ENCODE measurements at regions of chr3 and their contacts with region 1.

Region 1: DNA sequence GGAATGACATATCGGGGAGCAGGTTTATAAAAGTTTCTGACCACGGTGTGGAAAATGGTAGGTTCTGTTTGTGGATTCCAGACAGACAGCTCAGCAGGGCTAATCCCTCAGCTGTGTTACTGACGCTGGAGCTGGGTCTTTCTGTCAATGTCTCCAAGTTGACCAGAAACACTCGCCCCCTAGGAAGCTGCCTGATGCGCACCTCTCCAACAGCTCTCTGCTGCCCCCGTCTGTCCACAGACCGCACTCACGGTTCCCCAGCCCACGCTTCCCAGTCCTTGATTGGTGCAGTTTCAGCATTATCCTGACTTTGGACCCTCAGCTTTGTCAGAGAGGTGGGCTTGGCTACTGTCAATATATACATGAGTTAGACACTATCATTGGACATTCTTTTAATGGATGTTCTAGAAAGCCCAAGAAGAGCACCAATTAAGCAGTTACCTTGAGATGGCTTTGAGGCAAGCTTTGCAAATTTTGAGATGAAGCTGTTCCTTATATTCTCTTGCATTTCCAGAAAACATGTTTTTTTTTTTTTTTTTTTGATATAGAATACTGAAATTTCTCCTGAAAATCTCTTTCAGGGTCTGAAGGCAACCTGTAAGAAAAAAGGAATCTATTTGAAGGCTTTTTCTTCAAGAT is 98.9 kb upstream of the TBC1D5 start:
- DNase-seq: peak; percentile 46
- ATAC-seq: peak; percentile 99
- H3K4me3 ChIP-seq: no peak overlapping the region
- H3K27ac ChIP-seq: no peak overlapping the region
- H3K4me1 ChIP-seq: no peaks in the 10 kb centered on the region
- H3K27me3 ChIP-seq: peaks cover 2% of the 10 kb centered on the region
- CTCF ChIP-seq: peak; percentile 97
- POLR2A ChIP-seq: 0 out of 2 replicates have a peak, but pooled peaks have one; percentile 42
- RAD21 ChIP-seq: peak; percentile 96

Region 2: DNA sequence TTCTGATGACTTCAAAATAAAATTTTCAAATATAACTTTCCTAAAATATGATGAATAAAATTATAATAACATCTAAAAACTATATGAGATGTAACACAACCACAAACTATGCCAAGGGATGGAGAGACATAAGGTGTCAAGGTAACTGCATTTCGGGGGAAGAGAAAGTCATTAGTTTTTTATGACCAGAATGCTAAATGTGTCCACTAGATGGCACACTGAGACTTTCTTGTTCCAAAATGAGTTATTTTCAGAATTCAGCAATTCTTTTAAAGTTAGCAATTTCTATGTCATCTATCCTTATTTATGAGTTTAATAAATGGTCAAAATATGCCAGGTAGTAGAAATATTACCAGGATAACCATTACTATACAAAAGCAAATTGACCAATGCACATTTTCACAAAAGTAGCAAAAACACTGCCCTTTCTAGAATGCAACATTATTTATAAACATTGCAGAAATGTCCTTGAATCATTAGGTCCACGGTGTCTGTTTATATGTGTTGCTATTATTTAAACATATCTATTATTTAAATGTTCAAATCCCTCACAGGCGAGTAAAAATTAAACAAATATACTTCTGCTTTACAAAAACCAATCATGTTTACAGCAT is 582.4 kb before region 1 on chr3:
- CTCF ChIA-PET with region 1: no interaction called
- POLR2A ChIA-PET with region 1: no interaction called
- dilution Hi-C with region 1: no loop called
- in situ Hi-C with region 1: loop called (anchors 10 kb)
- intact Hi-C with region 1: loop called (anchors 1 kb)
- DNase-seq: peak; percentile 39
- ATAC-seq: 0 out of 2 replicates have a peak, but pooled peaks have one; percentile 27
- H3K4me3 ChIP-seq: no peak overlapping the region
- H3K27ac ChIP-seq: no peak overlapping the region
- H3K4me1 ChIP-seq: no peaks in the 10 kb centered on the region
- H3K27me3 ChIP-seq: no peaks in the 10 kb centered on the region
- CTCF ChIP-seq: peak; percentile 70
- POLR2A ChIP-seq: no peak
- RAD21 ChIP-seq: peak; percentile 69

Region 3: GRCh38 chr3:17423786-17424536 is 417.3 kb before region 1 on chr3:
- CTCF ChIA-PET with region 1: interaction called, 43 read pairs
- POLR2A ChIA-PET with region 1: no interaction called
- dilution Hi-C with region 1: no loop called
- in situ Hi-C with region 1: no loop called
- intact Hi-C with region 1: no loop called
- DNase-seq: peak; percentile 6
- ATAC-seq: peak; percentile 40; the same call in 1 of the 2 replicates
- H3K4me3 ChIP-seq: no peak overlapping the region
- H3K27ac ChIP-seq: no peak overlapping the region
- H3K4me1 ChIP-seq: no peaks in the 10 kb centered on the region
- H3K27me3 ChIP-seq: no peaks in the 10 kb centered on the region
- CTCF ChIP-seq: no peak
- POLR2A ChIP-seq: no peak
- RAD21 ChIP-seq: no peak

Region 4: DNA sequence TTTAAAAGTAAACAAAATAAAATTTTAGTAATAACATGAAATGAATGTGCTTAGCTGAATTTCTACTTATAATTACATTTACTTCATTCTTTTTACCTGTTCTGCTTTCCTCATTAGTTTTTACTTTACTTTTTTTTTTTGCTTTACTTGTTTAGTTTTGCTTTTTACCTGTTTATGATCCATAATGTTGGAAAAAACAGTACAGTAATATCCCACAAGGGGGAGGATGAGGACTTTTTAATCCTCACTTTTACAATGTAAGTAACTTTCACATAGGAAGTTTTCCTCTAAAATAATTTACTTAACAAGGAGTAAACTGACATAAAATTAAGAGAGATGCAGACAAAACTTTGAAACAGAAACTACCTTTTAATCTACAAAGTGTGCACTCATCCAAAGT is 367.5 kb before region 1 on chr3:
- CTCF ChIA-PET with region 1: interaction called, 5 read pairs
- POLR2A ChIA-PET with region 1: no interaction called
- dilution Hi-C with region 1: no loop called
- in situ Hi-C with region 1: no loop called
- intact Hi-C with region 1: loop called (anchors 1 kb)
- DNase-seq: peak; percentile 23
- ATAC-seq: no peak
- H3K4me3 ChIP-seq: no peak overlapping the region
- H3K27ac ChIP-seq: no peak overlapping the region
- H3K4me1 ChIP-seq: no peaks in the 10 kb centered on the region; the same call in 1 of the 2 replicates
- H3K27me3 ChIP-seq: no peaks in the 10 kb centered on the region
- CTCF ChIP-seq: peak; percentile 41
- POLR2A ChIP-seq: no peak
- RAD21 ChIP-seq: peak; percentile 40; the same call in 1 of the 2 replicates

Region 5: GRCh38 chr3:17544632-17545031 is 296.7 kb before region 1 on chr3:
- CTCF ChIA-PET with region 1: interaction called, 5 read pairs
- POLR2A ChIA-PET with region 1: no interaction called
- dilution Hi-C with region 1: no loop called
- in situ Hi-C with region 1: no loop called
- intact Hi-C with region 1: loop called (anchors 5 kb)
- DNase-seq: peak; percentile 1
- ATAC-seq: no peak; the same call in 1 of the 2 replicates
- H3K4me3 ChIP-seq: no peak overlapping the region
- H3K27ac ChIP-seq: no peak overlapping the region
- H3K4me1 ChIP-seq: no peaks in the 10 kb centered on the region
- H3K27me3 ChIP-seq: no peaks in the 10 kb centered on the region
- CTCF ChIP-seq: peak; percentile 27; the same call in 1 of the 2 replicates
- POLR2A ChIP-seq: no peak
- RAD21 ChIP-seq: peak; percentile 39

Region 6: GRCh38 chr3:17861476-17861875 is 20.2 kb after region 1 on chr3:
- CTCF ChIA-PET with region 1: no interaction called
- POLR2A ChIA-PET with region 1: no interaction called
- dilution Hi-C with region 1: no loop called
- in situ Hi-C with region 1: no loop called
- intact Hi-C with region 1: no loop called
- DNase-seq: no peak
- ATAC-seq: no peak
- H3K4me3 ChIP-seq: no peak overlapping the region
- H3K27ac ChIP-seq: no peak overlapping the region
- H3K4me1 ChIP-seq: no peaks in the 10 kb centered on the region
- H3K27me3 ChIP-seq: no peaks in the 10 kb centered on the region
- CTCF ChIP-seq: no peak
- POLR2A ChIP-seq: no peak
- RAD21 ChIP-seq: no peak